Activated B cell treated with CpG ODN at 0.5 μM for 24 hours (primary cell): ENCODE measurements at regions of chr5 and their contacts with region 1.

Region 1: GRCh38 chr5:140700177-140701144 is at the start of gene ZMAT2:
- DNase-seq: peak; percentile 77
- ATAC-seq: peak; percentile 100
- H3K4me3 Mint-ChIP-seq: peak within 1 kb of the TSS; percentile 98
- H3K27ac Mint-ChIP-seq: peak within 1 kb of the TSS; percentile 92
- H3K4me1 Mint-ChIP-seq: peaks cover 25% of the 10 kb centered on the region
- H3K27me3 Mint-ChIP-seq: no peaks in the 10 kb centered on the region
- CTCF ChIP-seq: no peak
- total RNA-seq, gene ZMAT2: 67.8 and 70.2 TPM in 2 replicates

Region 2: DNA sequence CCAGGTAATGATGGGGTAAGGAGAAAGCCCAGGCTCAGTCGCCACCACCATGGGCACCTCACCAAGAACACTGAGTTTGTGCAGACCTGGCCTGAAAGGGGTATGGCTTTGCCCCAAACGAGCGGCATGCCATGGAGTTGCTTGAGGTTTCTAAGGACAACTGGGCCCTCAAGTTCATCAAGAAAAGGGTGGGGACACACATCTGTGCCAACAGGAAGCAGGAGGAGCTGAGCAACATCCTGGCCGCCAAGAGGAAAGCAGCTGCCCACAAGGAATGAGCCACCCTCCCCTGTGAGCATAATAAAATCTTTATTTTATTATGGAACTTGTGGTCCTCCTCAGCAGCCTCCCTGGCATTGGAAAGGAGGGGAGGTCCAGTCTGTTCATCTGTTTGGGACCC is 91.3 kb before region 1 on chr5:
- CTCF ChIA-PET with region 1: no interaction called
- POLR2A ChIA-PET with region 1: no interaction called
- intact Hi-C with region 1: no loop called
- DNase-seq: no peak
- ATAC-seq: no peak
- H3K4me3 Mint-ChIP-seq: no peak overlapping the region
- H3K27ac Mint-ChIP-seq: no peak overlapping the region
- H3K4me1 Mint-ChIP-seq: peaks cover 19% of the 10 kb centered on the region
- H3K27me3 Mint-ChIP-seq: no peaks in the 10 kb centered on the region
- CTCF ChIP-seq: no peak

Region 3: GRCh38 chr5:140622301-140622700 is 78.2 kb before region 1 on chr5:
- CTCF ChIA-PET with region 1: no interaction called
- POLR2A ChIA-PET with region 1: no interaction called
- intact Hi-C with region 1: no loop called
- DNase-seq: no peak
- ATAC-seq: no peak
- H3K4me3 Mint-ChIP-seq: no peak overlapping the region
- H3K27ac Mint-ChIP-seq: no peak overlapping the region
- H3K4me1 Mint-ChIP-seq: no peaks in the 10 kb centered on the region
- H3K27me3 Mint-ChIP-seq: peaks cover 14% of the 10 kb centered on the region
- CTCF ChIP-seq: no peak

Region 4: GRCh38 chr5:141630570-141631140 is 930.2 kb after region 1 on chr5:
- CTCF ChIA-PET with region 1: no interaction called
- POLR2A ChIA-PET with region 1: interaction called, 12 read pairs
- intact Hi-C with region 1: no loop called
- DNase-seq: no peak
- ATAC-seq: no peak
- H3K4me3 Mint-ChIP-seq: no peak overlapping the region
- H3K27ac Mint-ChIP-seq: no peak overlapping the region
- H3K4me1 Mint-ChIP-seq: peaks cover 26% of the 10 kb centered on the region
- H3K27me3 Mint-ChIP-seq: no peaks in the 10 kb centered on the region
- CTCF ChIP-seq: no peak